GM12878 (cell line): ENCODE measurements at regions of chr15 and their contacts with region 1.

Region 1: GRCh38 chr15:31831596-31831995 is 198.7 kb upstream of the CHRNA7 start:
- DNase-seq: no peak
- ATAC-seq: no peak
- H3K4me3 ChIP-seq: no peak overlapping the region
- H3K27ac ChIP-seq: no peak overlapping the region
- H3K4me1 ChIP-seq: no peaks in the 10 kb centered on the region
- H3K27me3 ChIP-seq: peaks cover 0 to 2% of the 10 kb centered on the region in 2 experiments; a peak in 1 of 4 replicates
- CTCF ChIP-seq: no peak
- EP300 ChIP-seq: no peak
- POLR2A ChIP-seq: no peak
- RAD21 ChIP-seq: no peak

Region 2: DNA sequence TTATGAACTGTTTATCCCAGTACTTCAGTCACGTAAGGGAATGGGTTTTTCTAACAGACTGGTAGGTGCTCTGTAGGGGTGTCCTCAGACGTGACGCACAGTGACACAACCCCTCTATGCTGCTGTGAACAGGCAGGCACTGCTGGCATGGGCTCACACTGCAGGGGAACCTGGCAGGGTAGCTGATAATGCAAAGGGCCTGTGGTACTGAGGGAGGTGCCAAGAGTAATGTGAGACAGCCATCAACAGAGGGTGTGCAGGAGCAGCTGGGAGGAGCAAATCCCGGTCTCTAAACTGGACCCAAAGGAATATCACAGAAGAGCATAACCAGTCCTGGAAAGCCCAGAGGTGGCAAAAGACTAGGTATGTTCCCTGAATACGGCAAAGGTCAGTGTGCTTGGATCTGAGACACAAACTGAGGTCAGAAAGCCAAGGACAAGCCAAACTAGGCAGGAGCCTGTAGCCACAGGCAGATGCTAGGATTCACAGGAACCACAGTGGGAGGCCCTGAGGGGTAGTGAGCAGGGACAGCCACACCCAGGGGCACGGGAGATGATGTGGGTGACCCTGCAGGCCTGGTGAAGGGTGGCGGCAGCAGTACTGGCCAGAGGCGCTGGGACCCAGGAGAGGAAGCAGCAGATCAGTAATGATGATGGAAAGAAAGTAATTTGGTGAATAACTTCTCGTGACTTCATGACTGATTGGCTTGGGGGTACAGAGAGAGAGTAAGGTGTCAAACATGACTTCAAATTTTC is 49.4 kb before region 1 on chr15:
- CTCF ChIA-PET with region 1: no interaction called
- POLR2A ChIA-PET with region 1: no interaction called
- RAD21 ChIA-PET with region 1: no interaction called
- SMC1A ChIA-PET with region 1: no interaction called
- in situ Hi-C with region 1: loop called (anchors 5 kb)
- intact Hi-C with region 1: no loop called
- DNase-seq: no peak
- ATAC-seq: no peak
- H3K4me3 ChIP-seq: no peak overlapping the region
- H3K27ac ChIP-seq: no peak overlapping the region
- H3K4me1 ChIP-seq: no peaks in the 10 kb centered on the region
- H3K27me3 ChIP-seq: peaks cover 0 to 3% of the 10 kb centered on the region in 2 experiments; a peak in 2 of 4 replicates
- CTCF ChIP-seq: no peak
- EP300 ChIP-seq: no peak
- POLR2A ChIP-seq: no peak
- RAD21 ChIP-seq: no peak

Region 3: GRCh38 chr15:31857194-31857593 is 25.6 kb after region 1 on chr15:
- CTCF ChIA-PET with region 1: no interaction called
- POLR2A ChIA-PET with region 1: no interaction called
- RAD21 ChIA-PET with region 1: no interaction called
- SMC1A ChIA-PET with region 1: no interaction called
- in situ Hi-C with region 1: no loop called
- intact Hi-C with region 1: no loop called
- DNase-seq: no peak
- ATAC-seq: no peak
- H3K4me3 ChIP-seq: no peak overlapping the region
- H3K27ac ChIP-seq: no peak overlapping the region
- H3K4me1 ChIP-seq: no peaks in the 10 kb centered on the region
- H3K27me3 ChIP-seq: 0 out of 4 replicates have a peak, but pooled peaks cover 0 to 2% of the 10 kb centered on the region in 2 experiments
- CTCF ChIP-seq: no peak
- EP300 ChIP-seq: no peak
- POLR2A ChIP-seq: no peak
- RAD21 ChIP-seq: no peak